Left ventricle myocardium superior (tissue), 1 donor: ENCODE measurements at regions of chr16 and their contacts with region 1.

Region 1: DNA sequence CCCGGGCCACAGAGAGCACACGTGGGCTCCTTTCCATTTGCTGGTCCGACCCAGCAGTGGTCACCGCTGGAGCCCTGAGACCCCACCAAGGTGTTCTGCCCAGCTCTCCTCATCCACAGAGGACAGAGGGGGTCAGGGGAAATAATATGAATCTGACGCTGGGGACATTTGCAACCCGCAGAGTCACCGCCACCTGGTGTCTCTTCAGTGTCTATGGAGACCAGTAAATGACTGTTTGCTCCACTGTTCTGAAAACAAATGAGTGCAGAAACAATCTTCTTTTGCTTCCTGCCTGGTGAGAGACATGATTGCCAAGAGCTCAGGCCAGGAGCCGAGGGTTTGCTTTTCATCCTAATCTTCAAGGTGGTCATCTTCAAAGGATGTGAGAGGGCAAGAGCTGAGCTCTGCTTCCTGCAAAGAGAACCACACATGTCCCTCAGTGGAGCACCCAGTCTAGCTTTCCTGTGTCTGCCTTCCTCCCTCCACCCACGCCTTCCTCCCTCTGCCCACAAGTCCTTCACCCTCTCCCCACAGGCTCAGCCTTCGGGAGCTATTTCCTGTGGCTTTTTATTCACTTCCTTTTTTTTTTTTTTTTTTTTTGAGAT is 14.7 kb upstream of the KLHDC4 start:
- DNase-seq: peak; percentile 47
- ATAC-seq: peak; percentile 19

Region 2: DNA sequence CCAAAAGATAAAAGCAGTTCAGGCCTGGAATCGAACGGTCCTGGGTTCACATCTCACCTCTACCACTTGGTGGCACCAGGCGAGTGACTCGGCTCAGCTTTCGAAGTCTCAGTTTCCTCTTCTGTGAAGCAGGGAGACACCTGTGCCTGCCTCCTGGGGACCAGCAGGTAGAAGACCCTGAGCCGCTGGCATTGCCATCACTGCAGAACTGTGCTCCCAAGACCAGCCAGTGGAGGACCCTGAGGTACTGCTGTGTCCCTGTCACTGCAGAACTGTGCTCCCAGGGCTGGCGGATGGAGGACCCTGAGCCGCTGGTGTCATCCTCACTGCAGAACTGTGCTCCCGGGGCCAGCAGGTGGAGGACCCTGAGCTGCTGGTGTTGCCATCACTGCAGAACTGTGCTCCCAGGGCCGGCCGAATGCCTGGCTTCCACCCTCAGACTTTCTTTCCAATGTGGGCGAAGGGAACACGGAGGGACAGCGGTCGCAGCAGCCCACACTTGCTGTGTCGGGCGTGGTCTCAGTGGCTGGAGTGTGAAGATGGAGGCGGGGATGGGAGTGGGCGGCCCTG is 97.5 kb after region 1 on chr16:
- intact Hi-C with region 1: loop called (anchors 10 kb)
- DNase-seq: no peak
- ATAC-seq: no peak

Region 3: GRCh38 chr16:87891764-87892163 is 111.3 kb after region 1 on chr16:
- intact Hi-C with region 1: no loop called
- DNase-seq: no peak
- ATAC-seq: no peak

Region 4: DNA sequence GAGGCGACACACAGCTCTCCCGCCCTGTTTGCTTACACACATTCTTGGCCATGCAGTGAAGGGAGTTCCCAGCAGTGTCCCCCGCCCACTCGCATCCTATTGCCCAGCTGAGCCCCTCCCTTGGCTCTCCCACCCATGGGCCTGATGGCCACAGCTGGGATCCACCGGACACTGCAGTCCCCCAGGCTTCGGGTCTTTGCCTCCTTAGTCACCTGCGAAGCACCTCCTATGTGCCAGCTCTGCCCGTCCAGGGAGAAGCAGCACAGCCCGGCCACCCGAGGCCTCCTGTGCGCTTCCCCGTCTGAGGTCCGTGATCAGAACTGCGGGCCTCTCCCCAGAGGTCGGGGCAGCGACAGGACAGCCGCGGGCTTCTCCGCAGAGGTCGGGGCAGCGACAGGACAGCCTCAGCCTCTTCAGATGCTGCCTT is 307.7 kb after region 1 on chr16:
- intact Hi-C with region 1: no loop called
- DNase-seq: peak; percentile 67
- ATAC-seq: peak; percentile 70